ENCODE measurements at regions of chr1 and their contacts with region 1.

Region 1: GRCh38 chr1:40979233-40980067 is at the start of gene CTPS1:
- DNase-seq: peak; percentile 96
- H3K4me3 ChIP-seq: peak within 1 kb of the TSS; percentile 62
- H3K27ac ChIP-seq: peak within 1 kb of the TSS; percentile 94
- H3K4me1 ChIP-seq: peaks cover 10% of the 10 kb centered on the region
- H3K27me3 ChIP-seq: no peaks in the 10 kb centered on the region
- CTCF ChIP-seq: peak; percentile 38; the same call in 1 of the 2 replicates
- total RNA-seq, gene CTPS1: 126 and 139 TPM in 2 replicates

Region 2: GRCh38 chr1:40392221-40392620 is 587.2 kb before region 1 on chr1:
- CTCF ChIA-PET with region 1: no interaction called
- POLR2A ChIA-PET with region 1: interaction called, 17 read pairs
- intact Hi-C with region 1: no loop called
- DNase-seq: peak; percentile 90
- H3K4me3 ChIP-seq: no peak overlapping the region
- H3K27ac ChIP-seq: peak overlapping the region; percentile 4
- H3K4me1 ChIP-seq: peaks cover 26% of the 10 kb centered on the region
- H3K27me3 ChIP-seq: no peaks in the 10 kb centered on the region
- CTCF ChIP-seq: no peak

Region 3: DNA sequence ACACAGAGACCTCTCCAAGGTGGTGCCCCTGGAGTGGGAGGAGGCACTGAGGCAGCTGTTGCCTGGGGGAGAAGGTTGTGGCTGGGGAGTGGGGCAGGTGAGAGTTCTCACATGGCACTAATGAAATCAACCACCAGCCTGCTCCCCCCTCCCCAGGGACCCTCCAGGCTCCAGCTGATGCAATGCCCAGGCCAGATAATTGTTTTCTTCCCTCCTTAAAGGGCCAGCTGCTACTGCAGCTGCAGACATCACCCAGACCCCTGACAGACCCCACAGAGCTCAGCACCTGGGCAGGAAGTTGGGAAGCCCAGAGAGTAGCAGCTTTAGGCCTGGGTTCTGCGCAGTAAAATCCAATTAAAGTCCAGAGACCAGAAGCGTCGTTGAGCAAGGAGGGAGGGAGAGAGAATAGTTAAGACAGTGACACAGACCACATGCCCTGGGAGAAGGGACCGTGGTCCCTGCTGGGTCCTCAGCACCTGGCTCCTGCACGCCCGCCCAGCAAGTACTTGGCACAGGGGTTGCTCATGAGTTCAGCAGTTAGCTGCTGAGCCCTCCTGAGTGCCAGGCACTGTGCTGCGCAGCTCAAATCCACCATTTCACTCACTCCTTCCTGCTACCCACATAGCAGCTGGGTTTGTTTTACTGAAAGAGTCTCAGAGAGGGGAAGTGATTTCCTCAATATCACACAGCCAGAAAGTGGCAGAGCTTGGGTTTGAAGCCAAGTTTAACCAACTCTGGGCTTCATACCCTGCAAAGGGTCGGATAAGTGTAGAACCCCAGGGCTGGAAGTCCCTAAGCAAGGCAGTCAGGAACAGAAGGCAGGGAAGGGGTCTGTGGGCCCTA is 315.9 kb before region 1 on chr1:
- CTCF ChIA-PET with region 1: no interaction called
- POLR2A ChIA-PET with region 1: interaction called, 12 read pairs
- intact Hi-C with region 1: no loop called
- DNase-seq: peak; percentile 37
- H3K4me3 ChIP-seq: peak overlapping the region; percentile 7
- H3K27ac ChIP-seq: peak overlapping the region; percentile 69
- H3K4me1 ChIP-seq: peaks cover 28% of the 10 kb centered on the region
- H3K27me3 ChIP-seq: no peaks in the 10 kb centered on the region
- CTCF ChIP-seq: no peak

Measured in A673 (cell line).